CD4-positive, alpha-beta memory T cell (primary cell): ENCODE measurements at regions of chr17 and their contacts with region 1.

Region 1: GRCh38 chr17:43024407-43025289 is at the start of gene RND2:
- DNase-seq: peak; percentile 79 to 90 (median 81)
- H3K4me3 ChIP-seq: peak within 1 kb of the TSS; percentile 65 to 81
- H3K4me3 Mint-ChIP-seq: peak within 1 kb of the TSS; percentile 87 to 95 (median 91)
- H3K27ac ChIP-seq: peak within 1 kb of the TSS; percentile 69
- H3K27ac Mint-ChIP-seq: peak within 1 kb of the TSS; percentile 86 to 98 (median 96)
- H3K4me1 ChIP-seq: peaks cover 32% of the 10 kb centered on the region
- H3K4me1 Mint-ChIP-seq: peaks cover 9 to 35% (median 27%) of the 10 kb centered on the region in 4 donors
- H3K27me3 ChIP-seq: no peaks in the 10 kb centered on the region
- H3K27me3 Mint-ChIP-seq: no peaks in the 10 kb centered on the region
- total RNA-seq, gene RND2: 0.28 to 0.29 TPM

Region 2: DNA sequence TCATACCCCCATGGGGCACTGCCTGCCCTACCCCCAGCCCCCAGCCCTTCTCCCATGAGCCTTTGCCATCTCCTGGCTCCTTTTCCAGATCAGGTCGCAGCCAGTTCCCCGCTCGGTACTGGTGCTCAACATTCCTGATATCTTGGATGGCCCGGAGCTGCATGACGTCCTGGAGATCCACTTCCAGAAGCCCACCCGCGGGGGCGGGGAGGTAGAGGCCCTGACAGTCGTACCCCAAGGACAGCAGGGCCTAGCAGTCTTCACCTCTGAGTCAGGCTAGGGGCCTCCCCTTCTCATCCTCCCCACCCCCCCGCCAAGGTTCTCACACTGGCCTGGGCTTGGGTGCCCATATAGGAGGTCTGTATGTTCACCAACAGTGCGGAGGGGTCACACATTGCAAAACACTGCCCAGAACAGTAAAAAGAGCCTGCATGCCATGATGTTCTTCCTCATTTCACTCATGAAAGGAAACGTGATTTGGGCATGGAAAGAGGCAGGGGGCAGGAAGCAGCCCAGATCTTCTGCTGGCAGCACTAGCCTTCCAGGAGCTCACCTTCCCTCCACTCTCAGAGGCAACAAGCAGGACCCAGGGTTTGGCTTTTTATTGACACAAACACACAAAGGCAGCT is 10.5 kb before region 1 on chr17:
- CTCF ChIA-PET with region 1: interaction called, 3 read pairs
- POLR2A ChIA-PET with region 1: interaction called, 11 read pairs
- intact Hi-C with region 1: no loop called
- DNase-seq: no peak
- H3K4me3 ChIP-seq: no peak overlapping the region
- H3K4me3 Mint-ChIP-seq: no peak overlapping the region
- H3K27ac ChIP-seq: no peak overlapping the region
- H3K27ac Mint-ChIP-seq: peak overlapping the region in 4 of 7 donors; percentile 62 to 88 (median 78)
- H3K4me1 ChIP-seq: peaks cover 9% of the 10 kb centered on the region
- H3K4me1 Mint-ChIP-seq: peaks cover 13 to 35% (median 19%) of the 10 kb centered on the region in 4 donors
- H3K27me3 ChIP-seq: no peaks in the 10 kb centered on the region
- H3K27me3 Mint-ChIP-seq: no peaks in the 10 kb centered on the region

Region 3: DNA sequence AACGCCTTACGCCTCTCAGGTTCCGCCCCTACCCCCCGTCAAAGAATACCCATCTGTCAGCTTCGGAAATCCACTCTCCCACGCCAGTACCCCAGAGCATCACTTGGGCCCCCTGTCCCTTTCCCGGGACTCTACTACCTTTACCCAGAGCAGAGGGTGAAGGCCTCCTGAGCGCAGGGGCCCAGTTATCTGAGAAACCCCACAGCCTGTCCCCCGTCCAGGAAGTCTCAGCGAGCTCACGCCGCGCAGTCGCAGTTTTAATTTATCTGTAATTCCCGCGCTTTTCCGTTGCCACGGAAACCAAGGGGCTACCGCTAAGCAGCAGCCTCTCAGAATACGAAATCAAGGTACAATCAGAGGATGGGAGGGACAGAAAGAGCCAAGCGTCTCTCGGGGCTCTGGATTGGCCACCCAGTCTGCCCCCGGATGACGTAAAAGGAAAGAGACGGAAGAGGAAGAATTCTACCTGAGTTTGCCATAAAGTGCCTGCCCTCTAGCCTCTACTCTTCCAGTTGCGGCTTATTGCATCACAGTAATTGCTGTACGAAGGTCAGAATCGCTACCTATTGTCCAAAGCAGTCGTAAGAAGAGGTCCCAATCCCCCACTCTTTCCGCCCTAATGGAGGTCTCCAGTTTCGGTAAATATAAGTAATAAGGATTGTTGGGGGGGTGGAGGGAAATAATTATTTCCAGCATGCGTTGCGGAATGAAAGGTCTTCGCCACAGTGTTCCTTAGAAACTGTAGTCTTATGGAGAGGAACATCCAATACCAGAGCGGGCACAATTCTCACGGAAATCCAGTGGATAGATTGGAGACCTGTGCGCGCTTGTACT is 100.7 kb after region 1 on chr17 and contains the start of gene BRCA1:
- CTCF ChIA-PET with region 1: no interaction called
- POLR2A ChIA-PET with region 1: interaction called, 3 read pairs
- intact Hi-C with region 1: loop called (anchors 1 kb)
- DNase-seq: peak; percentile 95 to 98 (median 97)
- H3K4me3 ChIP-seq: peak within 1 kb of the TSS; percentile 80 to 89
- H3K4me3 Mint-ChIP-seq: peak within 1 kb of the TSS; percentile 87 to 98 (median 96)
- H3K27ac ChIP-seq: peak within 1 kb of the TSS; percentile 72
- H3K27ac Mint-ChIP-seq: peak within 1 kb of the TSS; percentile 82 to 98 (median 96)
- H3K4me1 ChIP-seq: peaks cover 17% of the 10 kb centered on the region
- H3K4me1 Mint-ChIP-seq: peaks cover 19 to 35% (median 27%) of the 10 kb centered on the region in 4 donors
- H3K27me3 ChIP-seq: no peaks in the 10 kb centered on the region
- H3K27me3 Mint-ChIP-seq: no peaks in the 10 kb centered on the region
- total RNA-seq, gene BRCA1: 4.8 to 6.0 TPM

Region 4: GRCh38 chr17:43135454-43135819 is 110.8 kb after region 1 on chr17:
- CTCF ChIA-PET with region 1: no interaction called
- POLR2A ChIA-PET with region 1: no interaction called
- intact Hi-C with region 1: no loop called
- DNase-seq: no peak
- H3K4me3 ChIP-seq: no peak overlapping the region
- H3K4me3 Mint-ChIP-seq: no peak overlapping the region
- H3K27ac ChIP-seq: no peak overlapping the region
- H3K27ac Mint-ChIP-seq: no peak overlapping the region
- H3K4me1 ChIP-seq: no peaks in the 10 kb centered on the region
- H3K4me1 Mint-ChIP-seq: peaks cover 3 to 14% (median 10%) of the 10 kb centered on the region in 4 donors
- H3K27me3 ChIP-seq: no peaks in the 10 kb centered on the region
- H3K27me3 Mint-ChIP-seq: no peaks in the 10 kb centered on the region

Region 5: DNA sequence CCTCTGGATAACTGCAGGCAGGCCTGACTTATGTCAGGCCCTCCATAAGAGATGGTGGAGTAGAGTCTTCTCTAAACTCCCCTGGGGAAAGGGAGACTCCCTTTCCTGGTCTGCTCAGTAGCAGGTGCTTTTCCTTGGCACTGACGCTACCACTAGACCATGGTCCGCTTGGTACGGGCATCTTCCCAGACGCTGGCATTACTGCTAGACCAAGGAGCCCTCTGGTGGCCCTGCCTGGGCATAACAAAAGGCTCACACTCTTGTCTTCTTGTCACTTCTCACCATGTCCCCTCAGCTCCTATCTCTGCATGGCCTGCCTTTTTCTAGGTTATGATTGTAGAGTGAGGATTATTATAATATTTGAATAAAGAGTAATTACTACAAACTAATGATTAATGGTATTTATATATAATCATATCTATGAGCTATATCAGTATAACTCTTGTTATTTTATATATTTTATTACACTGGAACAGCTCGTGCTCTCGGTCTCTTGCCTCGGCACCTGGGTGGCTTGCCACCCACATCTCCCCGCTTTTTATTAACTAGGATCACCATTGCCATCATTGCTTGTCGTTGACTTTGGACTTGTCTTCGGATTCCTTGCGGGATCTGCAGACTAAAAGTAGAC is 314.4 kb after region 1 on chr17:
- CTCF ChIA-PET with region 1: interaction called, 6 read pairs
- POLR2A ChIA-PET with region 1: no interaction called
- intact Hi-C with region 1: loop called (anchors 5 kb)
- DNase-seq: peak; percentile 45 to 63 (median 53)
- H3K4me3 ChIP-seq: no peak overlapping the region
- H3K4me3 Mint-ChIP-seq: no peak overlapping the region
- H3K27ac ChIP-seq: no peak overlapping the region
- H3K27ac Mint-ChIP-seq: no peak overlapping the region
- H3K4me1 ChIP-seq: peaks cover 2% of the 10 kb centered on the region
- H3K4me1 Mint-ChIP-seq: peaks cover 2 to 16% (median 7%) of the 10 kb centered on the region in 4 donors
- H3K27me3 ChIP-seq: no peaks in the 10 kb centered on the region
- H3K27me3 Mint-ChIP-seq: peaks cover 0 to 5% of the 10 kb centered on the region in 2 donors

Region 6: GRCh38 chr17:43367737-43368242 is 343.1 kb after region 1 on chr17:
- CTCF ChIA-PET with region 1: interaction called, 3 read pairs
- POLR2A ChIA-PET with region 1: interaction called, 15 read pairs
- intact Hi-C with region 1: no loop called
- DNase-seq: peak in 2 of 5 donors; percentile 60 to 87
- H3K4me3 ChIP-seq: peak overlapping the region; percentile 1 to 76
- H3K4me3 Mint-ChIP-seq: peak overlapping the region; percentile 91 to 98 (median 95)
- H3K27ac ChIP-seq: peak overlapping the region; percentile 91
- H3K27ac Mint-ChIP-seq: peak overlapping the region; percentile 99 to 100 (median 100)
- H3K4me1 ChIP-seq: peaks cover 22% of the 10 kb centered on the region
- H3K4me1 Mint-ChIP-seq: peaks cover 13 to 50% (median 35%) of the 10 kb centered on the region in 4 donors
- H3K27me3 ChIP-seq: no peaks in the 10 kb centered on the region
- H3K27me3 Mint-ChIP-seq: no peaks in the 10 kb centered on the region